ENCODE measurements at regions of chr12 and their contacts with region 1.

Region 1: GRCh38 chr12:30806989-30807694 is 52.4 kb upstream of the CAPRIN2 start:
- DNase-seq: peak; percentile 32 to 35
- H3K4me3 ChIP-seq: no peak overlapping the region
- H3K27ac ChIP-seq: no peak overlapping the region
- H3K4me1 ChIP-seq: no peaks in the 10 kb centered on the region
- H3K27me3 ChIP-seq: no peaks in the 10 kb centered on the region
- CTCF ChIP-seq: peak; percentile 42 to 97 (median 77)
- POLR2A ChIP-seq: no peak

Region 2: GRCh38 chr12:29519585-29520182 is 1287.5 kb before region 1 on chr12:
- intact Hi-C with region 1: loop called (anchors 10 kb)
- DNase-seq: peak in 1 of 2 donors; percentile 13
- H3K4me3 ChIP-seq: no peak overlapping the region
- H3K27ac ChIP-seq: no peak overlapping the region
- H3K4me1 ChIP-seq: no peaks in the 10 kb centered on the region
- H3K27me3 ChIP-seq: no peaks in the 10 kb centered on the region
- CTCF ChIP-seq: peak in 3 of 6 experiments; percentile 47 to 55 (median 50)
- POLR2A ChIP-seq: no peak

Measured in thyroid gland (tissue), 4 donors.